ENCODE measurements at regions of chr19 and their contacts with region 1.

Region 1: DNA sequence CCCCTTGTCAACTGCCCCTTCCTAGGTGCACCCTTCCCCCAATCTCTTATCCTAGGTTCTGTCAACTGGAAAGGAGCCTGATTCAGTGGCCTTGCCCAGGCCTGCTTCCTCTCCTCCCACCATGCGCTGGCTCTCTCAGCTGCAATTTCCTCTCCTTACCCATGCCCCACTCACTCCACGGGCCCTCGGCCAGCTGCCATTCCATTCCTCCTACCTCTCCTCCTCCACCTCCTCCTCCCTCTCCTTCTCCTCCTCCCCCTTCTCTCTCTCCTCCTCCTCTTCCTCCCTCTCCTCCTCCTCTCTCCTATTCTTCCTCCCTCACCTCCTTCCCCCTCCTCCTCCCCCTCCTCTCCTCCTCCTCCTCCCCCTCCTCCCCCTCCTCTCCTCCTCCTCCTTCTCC is 9.6 kb upstream of the TIMM44 start:
- DNase-seq: peak in 1 of 5 donors; percentile 20
- ATAC-seq: no peak
- H3K4me3 ChIP-seq: no peak overlapping the region
- H3K27ac ChIP-seq: no peak overlapping the region
- H3K4me1 ChIP-seq: peaks cover 0 to 12% (median 5%) of the 10 kb centered on the region in 12 donors
- H3K27me3 ChIP-seq: no peaks in the 10 kb centered on the region
- CTCF ChIP-seq: no peak
- POLR2A ChIP-seq: no peak

Region 2: DNA sequence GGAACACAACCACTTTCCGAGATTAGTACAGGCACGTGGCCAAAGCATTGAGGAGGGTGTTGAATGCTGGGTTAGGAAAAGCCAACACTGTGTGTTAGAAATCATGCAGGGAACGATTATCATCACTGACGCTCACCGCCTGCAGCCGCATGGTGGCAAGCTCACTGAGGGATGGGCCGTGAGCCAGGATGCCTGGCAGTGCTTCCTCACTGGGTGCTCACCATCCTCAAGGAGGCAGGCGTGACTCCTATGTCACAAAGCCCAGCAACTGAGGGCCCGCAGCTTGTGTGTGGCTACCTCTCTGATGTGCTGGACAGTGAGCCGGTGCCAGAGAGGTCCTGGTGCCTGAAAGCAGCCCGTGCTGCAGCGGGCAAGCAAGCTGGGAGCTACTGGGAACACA is 20.8 kb after region 1 on chr19:
- intact Hi-C with region 1: no loop called
- DNase-seq: peak; percentile 68 to 88 (median 83)
- ATAC-seq: peak; percentile 82 to 90 (median 86)
- H3K4me3 ChIP-seq: no peak overlapping the region
- H3K27ac ChIP-seq: peak overlapping the region in 7 of 12 donors; percentile 6 to 80 (median 62)
- H3K4me1 ChIP-seq: peaks cover 0 to 42% (median 9%) of the 10 kb centered on the region in 12 donors
- H3K27me3 ChIP-seq: no peaks in the 10 kb centered on the region
- CTCF ChIP-seq: peak in 2 of 12 donors; percentile 20 to 21
- POLR2A ChIP-seq: no peak

Region 3: GRCh38 chr19:7986321-7987083 is 33.4 kb after region 1 on chr19:
- intact Hi-C with region 1: loop called in 1 of 10 experiments (anchors 5 kb)
- DNase-seq: no peak
- ATAC-seq: peak in 2 of 4 donors; percentile 21 to 46
- H3K4me3 ChIP-seq: no peak overlapping the region
- H3K27ac ChIP-seq: peak overlapping the region in 6 of 12 donors; percentile 9 to 64 (median 34)
- H3K4me1 ChIP-seq: peaks cover 5 to 78% (median 46%) of the 10 kb centered on the region in 12 donors
- H3K27me3 ChIP-seq: no peaks in the 10 kb centered on the region
- CTCF ChIP-seq: no peak
- POLR2A ChIP-seq: no peak